ENCODE measurements at regions of chr20 and their contacts with region 1.

Region 1: DNA sequence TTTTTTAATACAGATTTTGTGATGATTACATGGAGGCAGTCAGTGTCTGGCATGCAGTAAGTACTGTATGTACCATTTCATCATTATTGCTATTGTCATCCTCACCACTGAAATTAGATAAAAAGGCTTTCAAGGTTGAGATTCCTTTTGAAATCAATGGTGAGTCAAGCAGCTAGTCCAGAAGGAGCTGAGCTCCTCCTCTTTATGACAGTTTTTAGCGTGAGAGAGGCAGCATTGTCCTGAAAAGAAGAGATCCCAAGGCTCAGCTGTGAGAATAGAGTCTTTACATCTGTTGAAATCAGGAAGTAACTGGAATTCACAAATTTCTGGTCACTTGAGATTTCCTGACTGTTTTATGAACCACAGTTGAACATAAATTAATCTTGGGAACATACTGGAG is 161.9 kb downstream of the PAX1 start:
- DNase-seq: no peak
- H3K4me3 ChIP-seq: no peak overlapping the region
- H3K27ac ChIP-seq: no peak overlapping the region
- H3K4me1 ChIP-seq: no peaks in the 10 kb centered on the region
- H3K27me3 ChIP-seq: no peaks in the 10 kb centered on the region
- CTCF ChIP-seq: no peak
- EP300 ChIP-seq: no peak
- POLR2A ChIP-seq: no peak

Region 2: GRCh38 chr20:20505554-20505953 is 1361.8 kb before region 1 on chr20:
- in situ Hi-C with region 1: no loop called
- intact Hi-C with region 1: loop called (anchors 5 kb)
- DNase-seq: no peak
- H3K4me3 ChIP-seq: no peak overlapping the region
- H3K27ac ChIP-seq: no peak overlapping the region
- H3K4me1 ChIP-seq: no peaks in the 10 kb centered on the region
- H3K27me3 ChIP-seq: no peaks in the 10 kb centered on the region
- CTCF ChIP-seq: no peak
- EP300 ChIP-seq: no peak
- POLR2A ChIP-seq: no peak

Region 3: GRCh38 chr20:21453680-21454079 is 413.7 kb before region 1 on chr20:
- in situ Hi-C with region 1: no loop called
- intact Hi-C with region 1: no loop called
- DNase-seq: no peak
- H3K4me3 ChIP-seq: no peak overlapping the region
- H3K27ac ChIP-seq: no peak overlapping the region
- H3K4me1 ChIP-seq: no peaks in the 10 kb centered on the region
- H3K27me3 ChIP-seq: peaks cover 3% of the 10 kb centered on the region
- CTCF ChIP-seq: no peak
- EP300 ChIP-seq: no peak
- POLR2A ChIP-seq: no peak